WTC11 (cell line): ENCODE measurements at regions of chr3 and their contacts with region 1.

Region 1: GRCh38 chr3:141011232-141011996 is 39.7 kb upstream of the SPSB4 start:
- DNase-seq: peak; percentile 95
- ATAC-seq: peak; percentile 96
- H3K4me3 Mint-ChIP-seq: no peak overlapping the region
- H3K27ac Mint-ChIP-seq: no peak overlapping the region
- H3K4me1 Mint-ChIP-seq: peaks cover 24% of the 10 kb centered on the region
- H3K27me3 Mint-ChIP-seq: no peaks in the 10 kb centered on the region; the same call in 1 of the 2 replicates
- CTCF ChIP-seq: peak; percentile 81

Region 2: GRCh38 chr3:141000027-141000663 is 11.3 kb before region 1 on chr3:
- CTCF ChIA-PET with region 1: interaction called, 36 read pairs
- POLR2A ChIA-PET with region 1: no interaction called
- DNase-seq: peak; percentile 77
- ATAC-seq: peak; percentile 99
- H3K4me3 Mint-ChIP-seq: no peak overlapping the region
- H3K27ac Mint-ChIP-seq: no peak overlapping the region
- H3K4me1 Mint-ChIP-seq: no peaks in the 10 kb centered on the region
- H3K27me3 Mint-ChIP-seq: no peaks in the 10 kb centered on the region
- CTCF ChIP-seq: peak; percentile 26; the same call in 1 of the 2 replicates